Activated naive CD4-positive, alpha-beta T cell treated with anti-CD3 and anti-CD28 coated beads, Interleukin-2, amount 10 ng/mL, durations not matched to agents 7 days and 5 days (primary cell): ENCODE measurements at regions of chr3 and their contacts with region 1.

Region 1: GRCh38 chr3:16290007-16290826 is 25.2 kb downstream of the OXNAD1 start:
- DNase-seq: peak; percentile 80
- H3K4me3 Mint-ChIP-seq: peak overlapping the region; percentile 92
- H3K27ac Mint-ChIP-seq: peak overlapping the region; percentile 97
- H3K4me1 Mint-ChIP-seq: peaks cover 68% of the 10 kb centered on the region
- H3K27me3 Mint-ChIP-seq: no peaks in the 10 kb centered on the region

Region 2: DNA sequence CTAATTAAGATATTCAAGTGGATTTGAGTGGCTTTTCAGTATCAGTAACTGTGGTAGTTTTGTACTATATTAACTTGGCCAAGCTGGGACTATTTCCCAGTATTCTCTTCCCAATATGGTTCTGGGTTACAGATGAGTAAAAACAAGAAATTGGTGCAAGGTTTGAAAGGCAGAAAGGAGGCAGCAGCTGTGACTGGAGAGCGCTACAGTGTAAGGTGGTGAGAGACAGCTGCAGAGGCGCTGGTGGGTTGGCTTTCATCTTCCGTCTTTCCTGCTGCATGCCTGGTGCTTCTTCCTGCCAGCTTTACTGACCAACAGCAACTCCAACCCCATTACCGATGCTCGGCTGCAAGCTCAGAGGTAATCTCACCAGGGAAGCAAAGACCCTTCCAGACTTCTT is 35.3 kb before region 1 on chr3:
- CTCF ChIA-PET with region 1: no interaction called
- DNase-seq: no peak
- H3K4me3 Mint-ChIP-seq: no peak overlapping the region
- H3K27ac Mint-ChIP-seq: peak overlapping the region; percentile 15
- H3K4me1 Mint-ChIP-seq: peaks cover 26% of the 10 kb centered on the region
- H3K27me3 Mint-ChIP-seq: no peaks in the 10 kb centered on the region

Region 3: GRCh38 chr3:16270855-16271254 is 19.4 kb before region 1 on chr3:
- CTCF ChIA-PET with region 1: interaction called, 21 read pairs
- DNase-seq: no peak
- H3K4me3 Mint-ChIP-seq: no peak overlapping the region
- H3K27ac Mint-ChIP-seq: no peak overlapping the region
- H3K4me1 Mint-ChIP-seq: peaks cover 24% of the 10 kb centered on the region
- H3K27me3 Mint-ChIP-seq: no peaks in the 10 kb centered on the region

Region 4: DNA sequence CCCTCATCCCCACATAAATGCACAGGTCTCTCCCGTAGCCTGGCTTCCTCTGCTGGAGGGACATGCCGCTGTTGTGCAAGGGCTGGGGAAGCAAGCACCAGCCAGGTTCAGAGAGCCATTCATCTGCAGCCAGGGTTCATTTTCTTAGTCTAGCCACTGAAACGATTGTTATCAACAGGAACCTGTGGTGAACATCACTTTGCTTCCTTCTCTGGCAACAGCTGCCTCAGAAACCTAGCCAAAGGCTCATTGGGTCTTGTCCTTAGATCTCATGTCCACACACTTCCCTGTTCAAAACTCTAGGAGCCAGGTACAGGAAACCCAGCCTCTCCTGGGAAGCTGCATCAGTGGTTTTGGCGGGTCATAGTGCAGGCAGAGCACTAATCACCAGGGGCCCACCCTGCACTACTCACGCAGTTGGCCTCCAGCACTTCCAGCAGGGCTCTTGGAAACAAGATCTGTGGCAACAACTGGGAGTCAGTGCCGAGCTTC is 21.8 kb after region 1 on chr3:
- CTCF ChIA-PET with region 1: interaction called, 246 read pairs
- DNase-seq: peak; percentile 76
- H3K4me3 Mint-ChIP-seq: peak overlapping the region; percentile 64
- H3K27ac Mint-ChIP-seq: peak overlapping the region; percentile 97
- H3K4me1 Mint-ChIP-seq: peaks cover 93% of the 10 kb centered on the region
- H3K27me3 Mint-ChIP-seq: no peaks in the 10 kb centered on the region

Region 5: GRCh38 chr3:16357186-16358147 is 67.2 kb after region 1 on chr3:
- CTCF ChIA-PET with region 1: no interaction called
- DNase-seq: no peak
- H3K4me3 Mint-ChIP-seq: no peak overlapping the region
- H3K27ac Mint-ChIP-seq: no peak overlapping the region
- H3K4me1 Mint-ChIP-seq: peaks cover 10% of the 10 kb centered on the region
- H3K27me3 Mint-ChIP-seq: no peaks in the 10 kb centered on the region

Region 6: DNA sequence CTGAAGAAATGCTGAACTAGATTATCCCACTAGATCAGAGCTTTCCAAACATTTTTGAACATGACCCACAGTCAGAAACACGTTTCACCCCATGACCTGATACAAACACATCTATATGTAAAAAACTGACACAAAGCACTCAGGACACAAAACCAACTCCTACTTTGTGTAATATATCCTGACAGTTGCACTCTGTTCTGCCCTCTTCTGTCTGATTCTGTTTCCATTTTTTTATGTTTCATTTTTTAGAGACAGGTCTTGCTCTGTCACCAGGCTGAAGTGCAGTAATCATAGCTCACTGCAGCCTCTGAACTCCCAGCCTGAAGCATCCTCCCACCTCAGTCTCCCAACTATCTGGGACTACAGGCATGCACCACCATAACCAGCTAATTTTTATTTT is 239.0 kb after region 1 on chr3:
- CTCF ChIA-PET with region 1: interaction called, 12 read pairs
- DNase-seq: no peak
- H3K4me3 Mint-ChIP-seq: no peak overlapping the region
- H3K27ac Mint-ChIP-seq: no peak overlapping the region
- H3K4me1 Mint-ChIP-seq: peaks cover 12% of the 10 kb centered on the region
- H3K27me3 Mint-ChIP-seq: peaks cover 27% of the 10 kb centered on the region